ENCODE measurements at regions of chr11 and their contacts with region 1.

Region 1: GRCh38 chr11:47766305-47767227 is 575 bp downstream of the FNBP4 start:
- DNase-seq: peak; percentile 48 to 90 (median 74)
- ATAC-seq: peak; percentile 33
- H3K4me3 ChIP-seq: peak overlapping the region; percentile 75 to 79
- H3K4me3 Mint-ChIP-seq: peak overlapping the region; percentile 94
- H3K27ac ChIP-seq: peak overlapping the region; percentile 91 to 97
- H3K27ac Mint-ChIP-seq: peak overlapping the region; percentile 100
- H3K4me1 ChIP-seq: peaks cover 29% of the 10 kb centered on the region
- H3K4me1 Mint-ChIP-seq: peaks cover 31% of the 10 kb centered on the region
- H3K27me3 ChIP-seq: no peaks in the 10 kb centered on the region
- H3K27me3 Mint-ChIP-seq: no peaks in the 10 kb centered on the region
- CTCF ChIP-seq: no peak

Region 2: GRCh38 chr11:47578524-47579460 is 187.8 kb before region 1 on chr11 and contains the starts of genes KBTBD4 and NDUFS3:
- CTCF ChIA-PET with region 1: no interaction called
- POLR2A ChIA-PET with region 1: no interaction called
- intact Hi-C with region 1: loop called (anchors 1 kb)
- DNase-seq: peak; percentile 74 to 95 (median 89)
- ATAC-seq: peak; percentile 94
- H3K4me3 ChIP-seq: peak within 1 kb of the TSS; percentile 90 to 92
- H3K4me3 Mint-ChIP-seq: peak within 1 kb of the TSS; percentile 99
- H3K27ac ChIP-seq: peak within 1 kb of the TSS; percentile 76 to 84
- H3K27ac Mint-ChIP-seq: peak within 1 kb of the TSS; percentile 97
- H3K4me1 ChIP-seq: peaks cover 31% of the 10 kb centered on the region
- H3K4me1 Mint-ChIP-seq: peaks cover 54% of the 10 kb centered on the region
- H3K27me3 ChIP-seq: no peaks in the 10 kb centered on the region
- H3K27me3 Mint-ChIP-seq: no peaks in the 10 kb centered on the region
- CTCF ChIP-seq: no peak
- total RNA-seq, gene KBTBD4: 31.8 to 32.6 TPM
- total RNA-seq, gene NDUFS3: 159 to 179 TPM

Region 3: DNA sequence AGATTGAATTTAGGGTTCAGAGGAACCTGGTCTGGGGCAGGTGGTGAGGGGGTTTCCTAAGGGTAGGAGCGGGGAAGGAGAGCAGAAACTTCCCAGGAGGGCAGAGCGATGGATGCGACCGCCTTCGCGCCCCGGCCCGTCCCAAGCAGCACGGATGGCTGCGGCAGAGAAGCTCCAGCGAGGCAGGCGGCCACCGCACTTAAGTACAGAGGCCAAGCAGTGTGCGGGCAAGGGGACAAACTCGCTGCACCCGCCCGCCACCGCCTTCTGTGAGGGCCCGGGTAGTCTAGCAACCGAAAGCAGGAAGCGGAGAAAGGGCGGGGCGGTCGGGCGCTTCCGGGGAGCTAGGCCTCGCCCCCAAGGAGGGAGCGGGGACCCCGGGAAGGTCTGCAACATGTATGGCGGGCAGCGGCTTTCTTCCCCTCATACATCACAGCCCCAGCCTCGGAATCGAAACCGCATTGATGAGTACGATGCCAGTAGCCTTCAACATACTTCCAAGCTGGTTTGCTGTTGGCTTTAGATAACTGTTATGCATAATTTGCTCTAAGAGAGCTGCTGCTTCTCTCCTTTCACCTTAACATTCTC is 51.4 kb before region 1 on chr11 and contains the start of gene AGBL2:
- CTCF ChIA-PET with region 1: no interaction called
- POLR2A ChIA-PET with region 1: interaction called, 10 read pairs
- intact Hi-C with region 1: loop called (anchors 1 to 2 kb)
- DNase-seq: peak; percentile 70 to 91 (median 86)
- ATAC-seq: peak; percentile 99
- H3K4me3 ChIP-seq: peak within 1 kb of the TSS; percentile 66 to 88
- H3K4me3 Mint-ChIP-seq: peak within 1 kb of the TSS; percentile 96
- H3K27ac ChIP-seq: peak within 1 kb of the TSS; percentile 81 to 88
- H3K27ac Mint-ChIP-seq: peak within 1 kb of the TSS; percentile 94
- H3K4me1 ChIP-seq: peaks cover 14% of the 10 kb centered on the region
- H3K4me1 Mint-ChIP-seq: peaks cover 21% of the 10 kb centered on the region
- H3K27me3 ChIP-seq: no peaks in the 10 kb centered on the region
- H3K27me3 Mint-ChIP-seq: no peaks in the 10 kb centered on the region
- CTCF ChIP-seq: no peak
- total RNA-seq, gene AGBL2: 3.6 to 5.0 TPM

Region 4: GRCh38 chr11:47725445-47726442 is 40.8 kb before region 1 on chr11:
- CTCF ChIA-PET with region 1: no interaction called
- POLR2A ChIA-PET with region 1: interaction called, 3 read pairs
- intact Hi-C with region 1: loop called in 1 of 2 experiments (anchors 5 kb)
- DNase-seq: no peak
- ATAC-seq: no peak
- H3K4me3 ChIP-seq: no peak overlapping the region
- H3K4me3 Mint-ChIP-seq: no peak overlapping the region
- H3K27ac ChIP-seq: no peak overlapping the region
- H3K27ac Mint-ChIP-seq: no peak overlapping the region
- H3K4me1 ChIP-seq: no peaks in the 10 kb centered on the region
- H3K4me1 Mint-ChIP-seq: peaks cover 2% of the 10 kb centered on the region
- H3K27me3 ChIP-seq: no peaks in the 10 kb centered on the region
- H3K27me3 Mint-ChIP-seq: no peaks in the 10 kb centered on the region
- CTCF ChIP-seq: no peak

Measured in CD8-positive, alpha-beta T cell (primary cell).